A549 (cell line): ENCODE measurements at regions of chr1 and their contacts with region 1.

Region 1: DNA sequence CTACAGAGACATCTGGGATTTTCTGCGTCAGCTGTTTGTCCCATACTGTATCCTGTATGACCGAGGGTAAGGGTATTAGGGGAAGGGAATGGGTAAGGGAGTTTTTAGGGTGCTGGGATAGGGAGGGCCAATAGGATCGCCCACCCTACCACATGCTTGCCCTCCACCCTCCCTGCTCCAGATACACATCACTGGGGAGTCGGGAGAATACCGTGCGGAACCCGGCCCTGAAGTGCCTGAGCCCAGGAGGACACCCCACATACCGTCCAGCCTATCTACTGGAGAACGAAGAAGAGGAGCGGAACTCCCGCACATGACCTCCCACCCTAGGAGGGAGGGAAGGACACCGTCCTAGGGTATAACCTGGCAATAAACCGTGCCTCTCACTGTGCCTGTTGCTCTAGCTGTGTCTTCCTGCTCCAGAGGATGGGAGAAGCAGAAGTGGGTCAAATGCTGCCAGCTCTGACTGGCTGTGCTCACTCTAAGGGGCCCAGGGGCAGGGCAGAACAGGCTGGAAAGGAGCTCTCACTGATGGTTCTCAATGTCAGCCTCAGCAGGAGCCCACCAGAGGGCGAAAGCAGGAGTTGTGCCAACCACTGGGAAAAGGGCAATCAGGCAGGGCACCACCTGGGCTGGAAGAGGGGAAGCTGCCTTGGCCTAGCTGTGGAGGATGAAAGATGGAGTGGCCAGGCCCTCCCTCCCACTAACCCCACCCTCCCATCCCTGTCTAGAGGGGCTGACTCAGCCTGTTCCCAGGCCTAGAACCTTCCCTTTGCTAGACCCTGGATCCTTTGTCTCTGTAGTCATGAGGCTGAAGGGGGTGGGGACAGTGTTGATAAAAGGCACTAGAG is 440 bp upstream of the LENEP start:
- DNase-seq: peak in 1 of 2 experiments; percentile 63
- ATAC-seq: peak; percentile 70 to 75
- H3K4me3 ChIP-seq: no peak overlapping the region
- H3K27ac ChIP-seq: peak overlapping the region; percentile 16 to 63; a peak in 4 of 6 replicates
- H3K4me1 ChIP-seq: peaks cover 29% of the 10 kb centered on the region
- CTCF ChIP-seq: peak; percentile 29
- EP300 ChIP-seq: no peak
- POLR2A ChIP-seq: no peak
- RAD21 ChIP-seq: peak in 1 of 2 experiments; percentile 30; a peak in 2 of 5 replicates

Region 2: DNA sequence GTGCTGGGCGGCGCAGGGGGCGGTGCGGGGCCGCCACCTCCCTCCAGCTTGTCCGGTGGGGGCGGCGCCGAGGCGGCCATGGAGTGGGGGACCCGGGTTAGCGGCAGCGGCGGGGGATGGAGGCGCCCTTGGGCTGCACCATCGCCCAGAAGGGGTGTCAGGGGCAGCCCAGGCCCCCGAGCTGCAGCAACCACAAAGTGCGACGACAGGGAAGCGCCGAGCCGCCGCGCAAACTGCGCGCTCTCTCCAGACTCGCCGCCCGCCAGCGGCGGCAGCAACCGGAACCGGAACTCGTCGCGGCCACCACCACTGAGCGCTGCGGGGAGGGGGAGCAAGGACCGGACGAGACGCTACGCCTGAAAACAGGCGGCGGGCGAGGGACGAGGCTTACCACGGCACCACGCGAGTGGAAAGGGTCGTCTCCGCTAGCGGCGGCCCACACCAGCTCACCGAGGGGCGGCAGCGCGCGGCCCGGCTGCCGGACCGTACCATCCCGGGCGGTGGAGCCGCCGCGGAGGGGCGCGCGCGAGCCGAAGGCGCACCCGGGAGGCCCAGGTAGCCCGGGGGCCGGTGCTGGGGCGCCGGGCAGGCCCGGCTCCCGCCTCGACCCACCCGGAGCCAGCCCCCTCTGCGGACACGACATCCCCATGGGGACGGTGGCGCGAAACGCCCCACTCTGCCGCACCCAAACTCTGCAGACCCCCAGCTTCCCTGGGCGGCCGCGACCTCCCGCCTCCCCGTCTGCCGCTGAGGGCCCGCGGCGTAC is 31.3 kb before region 1 on chr1 and contains the start of gene PYGO2:
- CTCF ChIA-PET with region 1: no interaction called
- POLR2A ChIA-PET with region 1: interaction called, 10 read pairs
- DNase-seq: peak; percentile 76 to 81
- ATAC-seq: peak; percentile 82 to 90
- H3K4me3 ChIP-seq: peak within 1 kb of the TSS; percentile 74
- H3K27ac ChIP-seq: peak within 1 kb of the TSS; percentile 97
- H3K4me1 ChIP-seq: peaks cover 28% of the 10 kb centered on the region
- CTCF ChIP-seq: peak; percentile 90
- EP300 ChIP-seq: no peak
- POLR2A ChIP-seq: peak; percentile 66
- RAD21 ChIP-seq: peak in 1 of 2 experiments; percentile 81; a peak in 4 of 5 replicates
- polyA plus RNA-seq, gene PYGO2: 24.6 and 25.8 TPM in 2 replicates